Activated T-helper 1 cell treated with anti-CD3 and anti-CD28 coated beads, Interleukin-12 subunit alpha, Interleukin-12 subunit beta, Interleukin-2, Interleukin-4 antibody, amounts not matched to agents 30 ng/mL and 10 ng/mL and 1 ng/mL, durations not matched to agents 14 hours and 24 hours and 36 hours (primary cell): ENCODE measurements at regions of chr19 and their contacts with region 1.

Region 1: GRCh38 chr19:42423462-42424344 is 3.5 kb downstream of the LIPE start:
- DNase-seq: peak; percentile 93
- H3K4me3 Mint-ChIP-seq: peak overlapping the region; percentile 99
- H3K27ac Mint-ChIP-seq: peak overlapping the region; percentile 98
- H3K4me1 Mint-ChIP-seq: peaks cover 32% of the 10 kb centered on the region
- H3K27me3 Mint-ChIP-seq: peaks cover 9% of the 10 kb centered on the region

Region 2: DNA sequence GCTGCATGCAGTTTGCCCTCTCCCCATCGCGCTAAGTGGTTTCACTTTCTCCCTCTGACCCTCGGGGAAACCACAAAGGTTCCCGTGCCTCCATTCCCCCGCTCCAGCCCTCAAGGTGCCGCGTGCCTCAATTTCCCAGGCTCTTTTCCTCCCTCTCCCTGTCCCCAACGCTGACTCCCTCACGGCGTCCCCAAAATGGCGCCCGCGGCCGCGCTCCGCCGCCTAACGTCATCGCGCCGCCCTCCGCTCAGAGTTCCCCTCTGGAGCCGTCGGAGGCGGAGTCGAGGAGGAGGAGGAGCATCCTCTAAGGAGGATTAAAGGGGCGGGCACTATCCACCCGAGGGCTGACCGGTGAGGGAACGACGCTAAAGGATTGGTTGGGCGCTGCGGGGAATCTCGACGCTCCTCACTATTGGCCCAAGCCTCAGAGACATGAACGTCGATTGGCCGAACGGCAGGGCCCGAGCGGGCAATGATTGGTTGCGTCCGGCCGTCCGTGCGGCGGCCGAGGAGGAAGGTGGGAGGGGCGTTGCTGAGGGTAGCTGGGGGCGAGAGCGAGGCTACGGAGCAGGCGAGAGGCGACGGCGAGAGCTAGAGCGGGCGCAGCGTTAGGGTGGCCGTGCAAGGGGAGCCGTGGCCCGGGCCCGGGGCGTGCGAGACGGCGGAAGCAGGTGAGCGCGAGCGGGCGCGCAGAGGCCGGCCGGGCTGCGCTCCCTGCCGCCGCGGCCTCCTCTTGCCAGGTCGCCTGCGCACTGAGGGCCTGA is 347.9 kb before region 1 on chr19 and contains the start of gene ZNF574:
- intact Hi-C with region 1: loop called (anchors 5 kb)
- DNase-seq: peak; percentile 97
- H3K4me3 Mint-ChIP-seq: peak within 1 kb of the TSS; percentile 97
- H3K27ac Mint-ChIP-seq: peak within 1 kb of the TSS; percentile 99
- H3K4me1 Mint-ChIP-seq: peaks cover 37% of the 10 kb centered on the region
- H3K27me3 Mint-ChIP-seq: peaks cover 1% of the 10 kb centered on the region
- total RNA-seq, gene ZNF574: 17.5 and 17.8 TPM in 2 replicates

Region 3: DNA sequence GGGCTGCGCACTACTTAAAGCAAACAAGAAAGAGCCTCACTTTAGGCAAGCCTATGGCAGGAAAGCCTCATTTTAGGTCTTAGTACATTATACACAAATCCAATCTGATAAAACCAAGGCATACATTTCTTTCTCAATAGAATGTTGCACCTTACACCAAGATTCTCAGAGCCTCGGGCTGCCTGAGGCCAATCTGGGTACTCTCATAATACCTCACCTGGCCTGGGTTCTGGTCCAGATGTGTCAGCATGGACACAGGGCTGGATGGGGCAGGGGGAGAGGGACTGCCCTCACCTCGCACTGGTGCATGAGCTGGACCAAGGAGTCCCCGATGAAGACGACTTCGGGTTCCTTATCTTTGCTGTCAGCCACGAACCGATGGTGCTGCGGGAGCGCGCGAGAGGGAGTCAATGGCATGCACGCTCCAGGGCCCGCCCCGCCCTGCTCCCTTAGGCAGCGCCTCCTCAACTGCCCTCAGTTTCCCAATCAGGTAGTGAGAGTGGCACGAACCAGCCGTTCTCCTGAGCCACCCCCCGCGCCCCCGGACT is 122.0 kb before region 1 on chr19 and contains the start of gene PRR19:
- intact Hi-C with region 1: loop called (anchors 1 kb)
- DNase-seq: no peak
- H3K4me3 Mint-ChIP-seq: peak within 1 kb of the TSS; percentile 88
- H3K27ac Mint-ChIP-seq: peak within 1 kb of the TSS; percentile 89
- H3K4me1 Mint-ChIP-seq: peaks cover 14% of the 10 kb centered on the region
- H3K27me3 Mint-ChIP-seq: peaks cover 2% of the 10 kb centered on the region
- total RNA-seq, gene PRR19: 1.0 and 1.4 TPM in 2 replicates

Region 4: GRCh38 chr19:42396381-42397262 is 27.1 kb before region 1 on chr19:
- intact Hi-C with region 1: loop called (anchors 1 kb)
- DNase-seq: peak; percentile 97
- H3K4me3 Mint-ChIP-seq: peak overlapping the region; percentile 89
- H3K27ac Mint-ChIP-seq: peak overlapping the region; percentile 93
- H3K4me1 Mint-ChIP-seq: peaks cover 34% of the 10 kb centered on the region
- H3K27me3 Mint-ChIP-seq: peaks cover 5% of the 10 kb centered on the region

Region 5: GRCh38 chr19:42440357-42441048 is 16.8 kb after region 1 on chr19:
- intact Hi-C with region 1: loop called (anchors 1 kb)
- DNase-seq: peak; percentile 68
- H3K4me3 Mint-ChIP-seq: no peak overlapping the region
- H3K27ac Mint-ChIP-seq: peak overlapping the region; percentile 4
- H3K4me1 Mint-ChIP-seq: peaks cover 24% of the 10 kb centered on the region
- H3K27me3 Mint-ChIP-seq: no peaks in the 10 kb centered on the region

Region 6: GRCh38 chr19:42529248-42529764 is 105.6 kb after region 1 on chr19:
- intact Hi-C with region 1: loop called (anchors 1 kb)
- DNase-seq: peak; percentile 58
- H3K4me3 Mint-ChIP-seq: peak overlapping the region; percentile 84
- H3K27ac Mint-ChIP-seq: peak overlapping the region; percentile 92
- H3K4me1 Mint-ChIP-seq: peaks cover 34% of the 10 kb centered on the region
- H3K27me3 Mint-ChIP-seq: peaks cover 4% of the 10 kb centered on the region